PC-9 (cell line): ENCODE measurements at regions of chr11 and their contacts with region 1.

Region 1: GRCh38 chr11:73257342-73258103 is 14.6 kb upstream of the P2RY6 start:
- DNase-seq: peak; percentile 88 to 99
- H3K4me3 ChIP-seq: peak overlapping the region; percentile 36; the same call in 1 of the 2 replicates
- H3K27ac ChIP-seq: peak overlapping the region; percentile 96
- H3K4me1 ChIP-seq: peaks cover 53% of the 10 kb centered on the region
- H3K27me3 ChIP-seq: no peaks in the 10 kb centered on the region
- CTCF ChIP-seq: no peak

Region 2: GRCh38 chr11:72848846-72849466 is 408.6 kb before region 1 on chr11:
- CTCF ChIA-PET with region 1: no interaction called
- POLR2A ChIA-PET with region 1: no interaction called
- intact Hi-C with region 1: no loop called
- DNase-seq: peak in 1 of 2 experiments; percentile 33
- H3K4me3 ChIP-seq: no peak overlapping the region
- H3K27ac ChIP-seq: no peak overlapping the region
- H3K4me1 ChIP-seq: no peaks in the 10 kb centered on the region
- H3K27me3 ChIP-seq: no peaks in the 10 kb centered on the region
- CTCF ChIP-seq: peak; percentile 77

Region 3: DNA sequence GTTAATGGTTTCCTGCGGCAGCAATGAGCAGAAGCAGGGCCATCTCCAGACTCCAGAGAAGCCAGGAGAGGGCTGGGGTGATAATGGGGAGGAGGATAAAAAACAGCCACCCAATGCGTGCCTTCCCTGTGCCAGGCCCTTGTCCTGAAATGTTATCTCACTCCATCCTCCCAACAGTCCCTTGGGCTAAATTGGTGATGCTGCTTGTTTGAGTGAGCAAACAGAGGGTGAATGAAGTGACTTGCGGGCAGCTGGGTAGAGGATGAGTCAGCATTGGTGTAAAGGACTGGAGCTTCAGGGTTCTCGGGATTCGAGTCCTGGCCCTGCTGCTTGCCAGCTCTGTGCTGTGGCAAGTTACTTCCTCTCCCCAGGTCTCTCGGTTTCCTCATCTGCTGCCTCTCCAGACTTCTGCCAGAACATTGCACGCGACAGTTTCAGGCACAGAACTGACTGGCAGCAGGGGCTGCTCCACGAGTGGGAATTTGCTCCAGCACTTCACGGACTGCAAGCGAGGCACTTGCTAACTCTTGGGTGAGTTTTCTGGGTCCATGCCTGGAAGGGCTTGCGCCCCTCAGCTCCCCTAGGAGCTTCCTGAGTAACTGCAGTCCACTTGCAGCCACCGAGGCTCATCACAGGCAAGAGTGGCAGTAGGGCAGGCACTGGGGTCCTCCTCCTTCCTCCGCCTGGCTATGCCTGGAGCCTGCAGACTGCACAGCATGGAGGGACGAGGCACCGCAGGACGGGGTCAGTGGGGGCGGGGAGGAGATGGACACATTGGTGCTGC is 14.6 kb after region 1 on chr11 and contains the start of gene P2RY6:
- CTCF ChIA-PET with region 1: interaction called, 5 read pairs
- POLR2A ChIA-PET with region 1: interaction called, 10 read pairs
- intact Hi-C with region 1: loop called (anchors 1 kb)
- DNase-seq: peak; percentile 84 to 99
- H3K4me3 ChIP-seq: peak within 1 kb of the TSS; percentile 80
- H3K27ac ChIP-seq: peak within 1 kb of the TSS; percentile 85
- H3K4me1 ChIP-seq: peaks cover 74% of the 10 kb centered on the region
- H3K27me3 ChIP-seq: no peaks in the 10 kb centered on the region
- CTCF ChIP-seq: no peak
- total RNA-seq, gene P2RY6: 29.7 and 34.7 TPM in 2 replicates